CD4-positive, alpha-beta memory T cell (primary cell): ENCODE measurements at regions of chr1 and their contacts with region 1.

Region 1: GRCh38 chr1:115052454-115053083 is 22.9 kb downstream of the TSHB start:
- DNase-seq: peak; percentile 44 to 67 (median 61)
- H3K4me3 ChIP-seq: no peak overlapping the region
- H3K4me3 Mint-ChIP-seq: no peak overlapping the region
- H3K27ac ChIP-seq: no peak overlapping the region
- H3K27ac Mint-ChIP-seq: no peak overlapping the region
- H3K4me1 ChIP-seq: peaks cover 5% of the 10 kb centered on the region
- H3K4me1 Mint-ChIP-seq: peaks cover 0 to 5% (median 2%) of the 10 kb centered on the region in 4 donors
- H3K27me3 ChIP-seq: no peaks in the 10 kb centered on the region
- H3K27me3 Mint-ChIP-seq: no peaks in the 10 kb centered on the region

Region 2: DNA sequence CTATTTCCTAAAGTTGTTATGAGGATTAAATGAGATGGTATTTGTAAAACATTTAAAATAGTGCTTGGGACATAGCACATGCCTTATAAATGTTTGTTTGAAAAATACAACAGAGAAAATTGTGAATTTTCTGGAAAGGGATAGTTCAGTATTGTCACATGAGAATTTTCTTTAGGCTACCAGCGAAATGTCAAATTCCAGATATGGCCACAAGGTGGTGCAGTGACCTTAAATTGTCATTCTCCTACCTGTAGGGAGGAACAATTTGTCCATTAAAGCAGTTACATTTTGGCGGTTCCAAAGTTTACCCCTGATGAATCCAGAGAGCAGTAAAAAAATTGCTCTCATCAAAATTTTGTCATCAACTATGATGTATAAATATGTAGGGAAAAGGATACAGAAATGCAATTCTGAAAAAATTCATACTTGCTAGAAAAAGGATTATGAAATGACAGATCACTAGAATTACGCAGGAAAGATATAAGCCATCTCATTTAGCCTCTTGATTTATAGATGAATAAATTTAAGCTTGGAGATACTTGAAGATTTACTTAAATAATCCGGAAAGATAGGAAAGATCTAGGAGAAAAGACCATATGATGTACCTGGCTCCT is 73.2 kb before region 1 on chr1:
- CTCF ChIA-PET with region 1: interaction called, 22 read pairs
- POLR2A ChIA-PET with region 1: no interaction called
- intact Hi-C with region 1: loop called (anchors 1 kb)
- DNase-seq: peak; percentile 57 to 67 (median 64)
- H3K4me3 ChIP-seq: no peak overlapping the region
- H3K4me3 Mint-ChIP-seq: no peak overlapping the region
- H3K27ac ChIP-seq: no peak overlapping the region
- H3K27ac Mint-ChIP-seq: no peak overlapping the region
- H3K4me1 ChIP-seq: no peaks in the 10 kb centered on the region
- H3K4me1 Mint-ChIP-seq: no peaks in the 10 kb centered on the region
- H3K27me3 ChIP-seq: no peaks in the 10 kb centered on the region
- H3K27me3 Mint-ChIP-seq: peaks cover 10 to 12% of the 10 kb centered on the region in 2 donors

Region 3: GRCh38 chr1:115062542-115063011 is 10.0 kb after region 1 on chr1:
- CTCF ChIA-PET with region 1: interaction called, 14 read pairs
- POLR2A ChIA-PET with region 1: interaction called, 9 read pairs
- intact Hi-C with region 1: loop called (anchors 1 kb)
- DNase-seq: peak; percentile 95 to 99 (median 97)
- H3K4me3 ChIP-seq: peak overlapping the region in 1 of 2 donors; percentile 33
- H3K4me3 Mint-ChIP-seq: peak overlapping the region; percentile 77 to 91 (median 84)
- H3K27ac ChIP-seq: peak overlapping the region; percentile 79
- H3K27ac Mint-ChIP-seq: peak overlapping the region; percentile 98 to 100 (median 100)
- H3K4me1 ChIP-seq: peaks cover 44% of the 10 kb centered on the region
- H3K4me1 Mint-ChIP-seq: peaks cover 43 to 57% (median 49%) of the 10 kb centered on the region in 4 donors
- H3K27me3 ChIP-seq: no peaks in the 10 kb centered on the region
- H3K27me3 Mint-ChIP-seq: no peaks in the 10 kb centered on the region

Region 4: GRCh38 chr1:115082949-115083348 is 30.4 kb after region 1 on chr1:
- CTCF ChIA-PET with region 1: interaction called, 13 read pairs
- POLR2A ChIA-PET with region 1: no interaction called
- intact Hi-C with region 1: no loop called
- DNase-seq: no peak
- H3K4me3 ChIP-seq: no peak overlapping the region
- H3K4me3 Mint-ChIP-seq: no peak overlapping the region
- H3K27ac ChIP-seq: no peak overlapping the region
- H3K27ac Mint-ChIP-seq: peak overlapping the region in 2 of 7 donors; percentile 24 to 27
- H3K4me1 ChIP-seq: peaks cover 22% of the 10 kb centered on the region
- H3K4me1 Mint-ChIP-seq: peaks cover 17 to 45% (median 29%) of the 10 kb centered on the region in 4 donors
- H3K27me3 ChIP-seq: no peaks in the 10 kb centered on the region
- H3K27me3 Mint-ChIP-seq: no peaks in the 10 kb centered on the region

Region 5: DNA sequence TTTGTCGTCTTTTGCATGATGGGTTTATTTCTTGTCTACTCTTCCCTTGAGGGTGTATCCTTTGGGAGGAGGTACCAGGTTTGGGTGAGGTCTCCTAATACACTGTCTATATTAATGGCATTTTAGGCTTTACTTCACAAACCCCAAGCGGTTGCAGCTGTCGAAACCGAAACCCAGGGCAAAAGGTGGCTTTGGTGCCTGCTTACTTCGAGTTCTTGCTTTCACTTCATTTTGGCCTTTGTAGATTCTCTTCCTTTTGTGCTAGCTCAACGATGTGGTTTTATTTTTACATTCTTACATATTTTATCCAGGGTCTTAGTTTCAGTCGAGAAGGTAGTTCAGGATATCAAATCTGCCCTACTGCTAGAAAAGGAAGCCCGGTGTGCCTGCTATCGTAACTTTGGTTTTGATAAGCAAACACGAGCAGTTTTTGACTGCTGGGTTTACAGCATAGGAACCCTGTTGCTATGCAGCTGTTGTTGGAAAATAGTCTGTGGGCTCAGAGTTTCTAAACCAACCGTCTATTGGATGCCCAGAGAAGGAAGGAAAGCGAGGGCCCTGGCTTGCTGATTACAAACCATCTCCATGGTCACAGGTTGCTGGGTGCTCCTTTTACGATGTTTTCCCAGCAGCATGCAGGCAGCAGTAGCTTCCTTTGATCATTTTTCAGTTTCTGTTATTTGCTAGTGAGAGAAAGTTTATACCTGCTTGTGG is 46.6 kb after region 1 on chr1:
- CTCF ChIA-PET with region 1: interaction called, 17 read pairs
- POLR2A ChIA-PET with region 1: interaction called, 9 read pairs
- intact Hi-C with region 1: no loop called
- DNase-seq: peak; percentile 88 to 96 (median 94)
- H3K4me3 ChIP-seq: peak overlapping the region; percentile 38 to 58
- H3K4me3 Mint-ChIP-seq: peak overlapping the region; percentile 87 to 99 (median 95)
- H3K27ac ChIP-seq: peak overlapping the region; percentile 89
- H3K27ac Mint-ChIP-seq: peak overlapping the region; percentile 94 to 100 (median 100)
- H3K4me1 ChIP-seq: peaks cover 40% of the 10 kb centered on the region
- H3K4me1 Mint-ChIP-seq: peaks cover 45 to 64% (median 53%) of the 10 kb centered on the region in 4 donors
- H3K27me3 ChIP-seq: no peaks in the 10 kb centered on the region
- H3K27me3 Mint-ChIP-seq: no peaks in the 10 kb centered on the region